Activated T-helper 1 cell treated with anti-CD3 and anti-CD28 coated beads, Interleukin-12 subunit alpha, Interleukin-12 subunit beta, Interleukin-2, Interleukin-4 antibody, amounts not matched to agents 30 ng/mL and 10 ng/mL and 1 ng/mL, durations not matched to agents 14 hours and 24 hours and 36 hours (primary cell): ENCODE measurements at regions of chr12 and their contacts with region 1.

Region 1: DNA sequence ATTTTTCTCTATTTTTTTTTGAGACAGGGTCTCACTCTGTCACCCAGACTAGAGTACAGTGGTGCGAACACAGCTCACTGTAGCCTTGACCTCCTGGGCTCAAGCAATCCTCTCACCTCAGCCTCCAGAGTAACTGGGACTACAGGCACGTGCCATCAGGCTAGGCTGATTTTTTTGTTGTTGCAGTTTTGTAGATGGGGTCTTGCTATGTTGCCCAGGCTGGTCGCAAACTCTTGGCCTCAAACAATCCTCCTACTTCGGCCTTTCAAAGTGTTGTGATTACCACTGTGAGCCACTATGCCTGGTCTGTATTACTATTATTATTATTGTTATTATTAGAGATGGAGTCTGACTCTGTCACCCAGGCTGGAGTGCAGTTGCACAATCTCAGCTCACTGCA is 23.3 kb downstream of the GIT2 start:
- DNase-seq: no peak
- H3K4me3 Mint-ChIP-seq: no peak overlapping the region
- H3K27ac Mint-ChIP-seq: no peak overlapping the region
- H3K4me1 Mint-ChIP-seq: peaks cover 27% of the 10 kb centered on the region
- H3K27me3 Mint-ChIP-seq: no peaks in the 10 kb centered on the region

Region 2: DNA sequence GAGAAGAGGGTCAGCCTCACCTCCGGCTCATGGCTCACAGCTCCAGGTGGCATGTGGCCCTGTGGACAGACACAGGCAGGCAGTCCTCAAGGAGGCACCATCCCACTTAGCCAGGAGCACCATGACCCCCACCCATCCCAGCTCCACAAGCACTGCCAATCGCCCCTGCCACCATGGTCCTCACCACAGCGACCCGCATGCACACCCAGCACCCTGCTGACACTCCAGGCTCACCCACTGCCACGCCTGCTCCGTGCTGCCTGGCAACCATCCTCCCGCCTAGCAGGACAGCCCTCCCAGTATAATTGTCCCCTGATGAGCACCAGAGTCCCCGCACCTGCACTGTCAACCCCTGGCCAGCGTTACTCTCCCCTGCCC is 190.5 kb before region 1 on chr12:
- intact Hi-C with region 1: no loop called
- DNase-seq: no peak
- H3K4me3 Mint-ChIP-seq: no peak overlapping the region
- H3K27ac Mint-ChIP-seq: no peak overlapping the region
- H3K4me1 Mint-ChIP-seq: peaks cover 4% of the 10 kb centered on the region
- H3K27me3 Mint-ChIP-seq: peaks cover 4% of the 10 kb centered on the region

Region 3: GRCh38 chr12:109987615-109988014 is 14.8 kb after region 1 on chr12:
- intact Hi-C with region 1: loop called (anchors 1 kb)
- DNase-seq: no peak
- H3K4me3 Mint-ChIP-seq: peak overlapping the region; percentile 1
- H3K27ac Mint-ChIP-seq: peak overlapping the region; percentile 84
- H3K4me1 Mint-ChIP-seq: peaks cover 57% of the 10 kb centered on the region
- H3K27me3 Mint-ChIP-seq: no peaks in the 10 kb centered on the region